GM10248 (cell line): ENCODE measurements at regions of chr19 and their contacts with region 1.

Region 1: GRCh38 chr19:35330475-35330874 is 1.5 kb downstream of the CD22 start:
- DNase-seq: peak; percentile 82
- CTCF ChIP-seq: no peak

Region 2: DNA sequence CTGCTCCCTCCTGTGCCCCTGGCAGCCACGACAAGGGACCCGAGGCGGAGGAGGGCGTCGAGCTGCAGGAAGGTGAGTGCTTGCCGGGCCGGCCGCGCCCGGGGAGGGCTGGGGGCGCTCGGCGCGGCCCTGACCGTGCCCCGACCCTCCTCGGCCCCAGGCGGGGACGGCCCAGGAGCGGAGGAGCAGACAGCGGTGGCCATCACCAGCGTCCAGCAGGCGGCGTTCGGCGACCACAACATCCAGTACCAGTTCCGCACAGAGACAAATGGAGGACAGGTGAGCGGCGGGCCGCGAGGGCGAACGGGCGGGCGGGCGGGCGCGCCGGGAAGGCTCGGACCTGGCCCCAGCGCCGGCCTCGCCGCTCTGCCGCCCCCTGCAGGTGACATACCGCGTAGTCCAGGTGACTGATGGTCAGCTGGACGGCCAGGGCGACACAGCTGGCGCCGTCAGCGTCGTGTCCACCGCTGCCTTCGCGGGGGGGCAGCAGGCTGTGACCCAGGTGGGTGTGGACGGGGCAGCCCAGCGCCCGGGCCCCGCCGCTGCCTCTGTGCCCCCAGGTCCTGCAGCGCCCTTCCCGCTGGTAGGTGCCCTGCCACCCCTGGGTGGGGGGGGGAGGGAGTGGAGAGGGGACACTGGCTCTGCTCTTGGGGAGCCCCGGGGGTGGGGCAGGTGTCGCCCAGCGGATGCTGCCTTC is 60.9 kb before region 1 on chr19:
- CTCF ChIA-PET with region 1: interaction called, 12 read pairs
- POLR2A ChIA-PET with region 1: interaction called, 4 read pairs
- DNase-seq: peak; percentile 89
- CTCF ChIP-seq: peak; percentile 73

Region 3: DNA sequence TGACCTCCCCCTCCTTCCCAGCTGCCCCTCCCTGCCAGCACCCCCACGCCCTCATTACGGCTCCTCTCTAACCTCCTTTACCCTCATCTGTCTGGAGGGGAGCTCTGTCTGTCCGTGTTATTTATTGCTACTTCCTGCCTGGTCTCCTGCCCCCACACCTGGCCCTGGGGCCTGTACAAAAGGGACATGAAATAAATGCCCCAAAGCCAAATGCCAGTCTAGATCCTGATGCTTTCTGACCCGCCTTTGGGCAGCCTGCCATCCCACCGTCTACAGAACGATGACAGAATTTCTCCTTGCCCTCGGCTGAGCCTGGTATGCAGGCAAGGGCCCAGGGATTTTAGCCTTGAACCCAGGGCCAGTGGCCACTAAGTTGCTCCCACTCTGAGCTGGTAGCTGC is 16.9 kb before region 1 on chr19:
- CTCF ChIA-PET with region 1: interaction called, 10 read pairs
- POLR2A ChIA-PET with region 1: interaction called, 5 read pairs
- DNase-seq: no peak
- CTCF ChIP-seq: no peak

Region 4: GRCh38 chr19:35318650-35319448 is 11.6 kb before region 1 on chr19:
- CTCF ChIA-PET with region 1: interaction called, 10 read pairs
- POLR2A ChIA-PET with region 1: interaction called, 10 read pairs
- DNase-seq: no peak
- CTCF ChIP-seq: no peak

Region 5: DNA sequence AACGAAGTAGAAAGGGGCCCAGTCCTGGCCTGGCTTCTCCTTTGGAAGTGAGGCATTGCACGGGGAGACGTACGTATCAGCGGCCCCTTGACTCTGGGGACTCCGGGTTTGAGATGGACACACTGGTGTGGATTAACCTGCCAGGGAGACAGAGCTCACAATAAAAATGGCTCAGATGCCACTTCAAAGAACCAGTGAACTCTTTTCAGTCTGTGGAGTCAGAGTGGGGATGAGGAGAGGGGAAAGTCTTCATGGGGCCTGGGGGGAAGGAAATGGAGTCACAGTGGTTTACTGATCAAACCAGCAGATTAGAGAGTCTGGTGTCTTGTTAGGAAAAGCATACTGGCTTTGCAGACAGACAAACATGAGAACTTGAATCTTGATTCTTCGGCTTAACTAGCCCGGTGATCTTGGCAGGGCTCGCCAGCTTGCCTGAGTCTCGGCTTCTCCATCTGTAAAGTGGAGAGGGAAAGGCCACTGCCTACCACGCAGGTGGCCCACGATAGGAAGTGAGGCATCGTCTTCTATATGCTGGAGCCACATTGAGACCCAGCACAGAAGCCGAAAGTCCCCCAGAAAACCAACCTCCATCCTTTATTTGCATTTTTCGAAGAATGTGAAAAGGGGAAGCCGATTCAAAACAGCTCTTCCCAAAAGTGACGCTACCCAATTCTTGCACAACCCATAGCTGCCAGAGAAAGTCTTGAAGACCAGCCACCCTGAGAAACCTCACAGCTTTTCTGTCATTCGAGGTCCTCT is 16.9 kb after region 1 on chr19 and contains the start of gene FFAR1:
- CTCF ChIA-PET with region 1: interaction called, 26 read pairs
- POLR2A ChIA-PET with region 1: interaction called, 5 read pairs
- DNase-seq: peak; percentile 78
- CTCF ChIP-seq: no peak